Activated B cell treated with CpG ODN at 0.5 μM for 24 hours (primary cell): ENCODE measurements at regions of chr4 and their contacts with region 1.

Region 1: DNA sequence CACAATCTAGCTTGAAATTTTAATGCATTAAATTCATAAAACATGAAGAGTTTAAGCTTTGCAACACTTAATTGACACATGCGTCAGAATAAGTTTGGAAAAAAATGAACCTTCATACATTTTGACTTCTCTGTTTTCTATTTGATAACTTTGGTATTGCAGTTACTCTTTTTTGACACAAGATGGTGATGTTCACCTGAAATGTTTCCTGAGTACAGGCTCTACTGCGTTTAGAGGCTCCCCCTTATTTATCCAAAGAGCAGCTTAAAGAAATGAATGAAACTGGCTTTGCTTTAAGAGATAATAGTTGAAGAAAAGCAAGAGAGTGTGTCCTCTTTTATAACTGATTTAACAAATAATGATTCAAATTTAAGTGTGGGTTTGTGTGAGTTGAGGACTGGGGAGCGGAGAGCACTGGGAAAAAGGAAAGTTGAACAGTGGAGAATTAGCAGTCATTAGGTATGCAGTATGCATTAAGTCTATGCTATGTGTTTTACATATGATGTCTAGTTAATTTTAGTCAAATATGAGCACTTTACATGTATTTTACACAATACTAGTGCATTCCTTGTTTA is 180.6 kb upstream of the NUDT6 start:
- DNase-seq: no peak
- ATAC-seq: no peak
- H3K4me3 Mint-ChIP-seq: no peak overlapping the region
- H3K27ac Mint-ChIP-seq: no peak overlapping the region
- H3K4me1 Mint-ChIP-seq: no peaks in the 10 kb centered on the region
- H3K27me3 Mint-ChIP-seq: no peaks in the 10 kb centered on the region
- CTCF ChIP-seq: no peak

Region 2: GRCh38 chr4:123564758-123565346 is 461.9 kb after region 1 on chr4:
- CTCF ChIA-PET with region 1: interaction called, 4 read pairs
- POLR2A ChIA-PET with region 1: no interaction called
- intact Hi-C with region 1: loop called (anchors 1 kb)
- DNase-seq: no peak
- ATAC-seq: peak; percentile 100
- H3K4me3 Mint-ChIP-seq: no peak overlapping the region
- H3K27ac Mint-ChIP-seq: no peak overlapping the region
- H3K4me1 Mint-ChIP-seq: peaks cover 3% of the 10 kb centered on the region
- H3K27me3 Mint-ChIP-seq: peaks cover 8% of the 10 kb centered on the region
- CTCF ChIP-seq: no peak

Region 3: DNA sequence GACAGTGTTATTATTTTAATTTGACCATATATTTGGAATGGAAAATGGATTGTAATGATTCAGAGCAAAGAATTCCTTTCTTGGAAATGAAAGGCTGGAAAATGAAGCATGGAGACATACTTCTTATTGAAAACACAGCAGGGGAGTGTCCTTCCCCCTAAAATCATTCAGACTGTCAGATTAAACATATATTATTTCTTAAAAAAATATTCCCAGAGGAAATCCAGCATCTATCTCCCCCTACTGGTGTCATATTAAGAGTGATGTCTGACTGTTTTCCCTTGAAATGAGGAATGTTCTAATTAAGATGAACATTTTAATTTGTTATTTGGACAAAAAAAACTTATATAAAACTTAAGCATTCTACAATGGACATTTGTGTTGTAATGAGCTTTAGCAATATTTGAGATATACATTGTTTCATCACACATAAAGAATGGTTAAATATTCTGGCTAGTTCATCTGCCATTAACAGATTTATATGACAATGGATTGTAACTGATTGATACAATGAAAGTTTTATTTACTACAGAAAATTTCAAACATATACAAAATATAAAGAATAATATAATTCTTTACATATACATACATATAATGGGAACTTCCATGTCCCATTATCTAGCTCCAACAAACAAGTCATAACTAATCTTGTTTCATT is 558.2 kb after region 1 on chr4:
- CTCF ChIA-PET with region 1: interaction called, 10 read pairs
- POLR2A ChIA-PET with region 1: no interaction called
- intact Hi-C with region 1: loop called (anchors 1 kb)
- DNase-seq: no peak
- ATAC-seq: no peak
- H3K4me3 Mint-ChIP-seq: no peak overlapping the region
- H3K27ac Mint-ChIP-seq: no peak overlapping the region
- H3K4me1 Mint-ChIP-seq: peaks cover 12% of the 10 kb centered on the region
- H3K27me3 Mint-ChIP-seq: peaks cover 17% of the 10 kb centered on the region
- CTCF ChIP-seq: no peak

Region 4: GRCh38 chr4:123770884-123771283 is 667.9 kb after region 1 on chr4:
- CTCF ChIA-PET with region 1: interaction called, 5 read pairs
- POLR2A ChIA-PET with region 1: no interaction called
- intact Hi-C with region 1: loop called (anchors 5 kb)
- DNase-seq: no peak
- ATAC-seq: no peak
- H3K4me3 Mint-ChIP-seq: no peak overlapping the region
- H3K27ac Mint-ChIP-seq: no peak overlapping the region
- H3K4me1 Mint-ChIP-seq: peaks cover under 1% of the 10 kb centered on the region
- H3K27me3 Mint-ChIP-seq: peaks cover 6% of the 10 kb centered on the region
- CTCF ChIP-seq: no peak

Region 5: DNA sequence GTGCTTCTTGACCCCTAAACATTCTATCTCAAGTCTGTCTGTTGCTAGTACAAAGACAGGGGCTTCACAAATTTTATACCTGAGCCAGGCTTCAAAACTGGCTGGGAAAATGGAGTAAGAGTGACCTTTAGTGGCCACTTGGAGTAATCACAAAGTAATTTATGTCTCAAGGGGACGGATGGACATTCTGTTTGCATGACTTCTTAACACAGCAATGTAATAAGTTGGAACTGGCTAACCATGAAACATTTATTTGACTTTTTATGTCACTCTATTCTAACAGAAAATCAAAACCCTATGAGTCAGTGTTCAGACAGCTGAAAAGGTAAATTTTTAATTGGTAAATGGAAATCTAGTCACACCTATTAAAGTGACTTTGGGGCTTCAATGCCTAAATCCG is 1008.9 kb after region 1 on chr4:
- CTCF ChIA-PET with region 1: interaction called, 3 read pairs
- POLR2A ChIA-PET with region 1: no interaction called
- intact Hi-C with region 1: loop called (anchors 1 kb)
- DNase-seq: no peak
- ATAC-seq: no peak
- H3K4me3 Mint-ChIP-seq: no peak overlapping the region
- H3K27ac Mint-ChIP-seq: no peak overlapping the region
- H3K4me1 Mint-ChIP-seq: no peaks in the 10 kb centered on the region
- H3K27me3 Mint-ChIP-seq: no peaks in the 10 kb centered on the region
- CTCF ChIP-seq: no peak

Region 6: DNA sequence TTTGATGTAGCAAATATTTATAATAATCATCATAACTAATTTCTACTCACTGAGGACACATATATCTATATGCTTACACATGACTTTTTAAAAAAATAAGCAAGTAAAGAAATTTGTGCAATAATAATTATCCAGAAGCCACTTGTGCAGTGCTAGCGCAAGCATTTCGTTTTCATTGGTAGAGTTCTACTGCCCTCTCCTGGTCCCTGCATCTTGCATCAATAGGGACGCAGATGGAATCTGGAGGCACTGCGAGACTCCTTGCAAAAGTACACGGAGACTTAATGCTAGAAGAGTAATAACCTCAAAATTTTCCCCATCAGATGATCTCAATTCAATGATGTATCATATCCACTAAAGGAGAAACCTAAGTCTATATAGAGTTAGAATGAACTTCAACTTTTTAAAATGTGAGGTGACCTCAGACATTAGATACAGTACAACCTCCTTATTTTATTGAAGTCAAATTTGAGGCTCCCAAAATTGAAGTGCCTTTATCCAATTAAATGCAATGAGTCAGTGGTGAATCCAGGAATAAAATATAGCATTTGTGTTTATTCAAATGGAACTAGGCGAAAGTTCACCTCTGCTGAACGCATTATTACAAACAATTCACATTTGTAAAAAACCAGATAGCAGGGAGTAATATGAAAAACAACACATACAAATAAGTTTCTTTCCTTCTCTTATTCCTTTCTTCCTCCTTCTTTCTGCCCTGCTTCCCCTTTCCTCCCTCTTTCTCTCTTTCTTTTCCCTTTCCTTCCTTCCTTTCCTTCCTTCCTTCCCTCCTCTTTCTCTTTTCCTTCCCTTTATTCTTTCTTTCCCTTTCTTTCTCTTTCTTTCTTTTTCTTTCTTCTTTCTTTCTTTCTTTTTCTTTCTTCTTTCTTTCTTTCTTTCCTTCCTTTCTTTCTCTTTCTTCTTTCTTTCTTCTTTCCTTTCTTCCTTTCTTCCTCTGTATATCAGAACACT is 1159.5 kb after region 1 on chr4:
- CTCF ChIA-PET with region 1: interaction called, 8 read pairs
- POLR2A ChIA-PET with region 1: no interaction called
- intact Hi-C with region 1: loop called (anchors 1 kb)
- DNase-seq: no peak
- ATAC-seq: peak; percentile 56
- H3K4me3 Mint-ChIP-seq: no peak overlapping the region
- H3K27ac Mint-ChIP-seq: no peak overlapping the region
- H3K4me1 Mint-ChIP-seq: no peaks in the 10 kb centered on the region
- H3K27me3 Mint-ChIP-seq: no peaks in the 10 kb centered on the region
- CTCF ChIP-seq: no peak

Region 7: GRCh38 chr4:124322234-124323065 is 1219.5 kb after region 1 on chr4:
- CTCF ChIA-PET with region 1: interaction called, 11 read pairs
- POLR2A ChIA-PET with region 1: no interaction called
- intact Hi-C with region 1: loop called (anchors 1 kb)
- DNase-seq: no peak
- ATAC-seq: no peak
- H3K4me3 Mint-ChIP-seq: no peak overlapping the region
- H3K27ac Mint-ChIP-seq: no peak overlapping the region
- H3K4me1 Mint-ChIP-seq: no peaks in the 10 kb centered on the region
- H3K27me3 Mint-ChIP-seq: no peaks in the 10 kb centered on the region
- CTCF ChIP-seq: no peak